Calu3 (cell line): ENCODE measurements at regions of chr11 and their contacts with region 1.

Region 1: DNA sequence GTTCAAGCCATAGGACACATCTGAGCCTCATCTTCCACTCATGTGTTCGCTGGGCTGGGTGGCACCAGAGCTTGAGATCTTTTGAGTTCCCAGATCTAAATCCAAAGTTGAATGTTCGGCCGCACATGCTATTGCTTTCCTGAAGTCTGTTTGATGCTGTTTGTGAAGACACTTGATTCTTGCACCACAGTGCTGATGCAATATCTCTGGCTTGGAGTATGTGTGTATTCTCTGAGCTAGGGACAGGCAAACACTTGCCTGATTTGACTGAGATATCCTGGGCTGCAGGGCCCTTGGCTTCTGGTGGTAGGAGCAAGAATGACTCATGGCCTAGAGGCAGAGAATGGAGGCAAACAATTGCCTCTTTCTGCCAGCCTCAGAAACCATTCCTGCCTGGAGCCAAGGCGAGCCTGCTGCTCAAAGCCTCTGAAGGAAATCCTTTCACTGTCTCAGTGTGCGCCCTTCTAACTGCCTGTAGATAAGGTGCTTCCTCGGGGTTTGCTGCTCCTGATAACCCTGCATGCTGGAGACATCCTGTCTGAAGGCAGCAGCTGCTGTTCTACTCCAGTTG is 73.0 kb downstream of the CYB5R2 start:
- DNase-seq: peak; percentile 68
- H3K4me3 Mint-ChIP-seq: peak overlapping the region; percentile 26
- H3K27ac Mint-ChIP-seq: peak overlapping the region; percentile 87
- H3K4me1 Mint-ChIP-seq: peaks cover 62% of the 10 kb centered on the region
- H3K27me3 Mint-ChIP-seq: no peaks in the 10 kb centered on the region
- CTCF ChIP-seq: no peak

Region 2: DNA sequence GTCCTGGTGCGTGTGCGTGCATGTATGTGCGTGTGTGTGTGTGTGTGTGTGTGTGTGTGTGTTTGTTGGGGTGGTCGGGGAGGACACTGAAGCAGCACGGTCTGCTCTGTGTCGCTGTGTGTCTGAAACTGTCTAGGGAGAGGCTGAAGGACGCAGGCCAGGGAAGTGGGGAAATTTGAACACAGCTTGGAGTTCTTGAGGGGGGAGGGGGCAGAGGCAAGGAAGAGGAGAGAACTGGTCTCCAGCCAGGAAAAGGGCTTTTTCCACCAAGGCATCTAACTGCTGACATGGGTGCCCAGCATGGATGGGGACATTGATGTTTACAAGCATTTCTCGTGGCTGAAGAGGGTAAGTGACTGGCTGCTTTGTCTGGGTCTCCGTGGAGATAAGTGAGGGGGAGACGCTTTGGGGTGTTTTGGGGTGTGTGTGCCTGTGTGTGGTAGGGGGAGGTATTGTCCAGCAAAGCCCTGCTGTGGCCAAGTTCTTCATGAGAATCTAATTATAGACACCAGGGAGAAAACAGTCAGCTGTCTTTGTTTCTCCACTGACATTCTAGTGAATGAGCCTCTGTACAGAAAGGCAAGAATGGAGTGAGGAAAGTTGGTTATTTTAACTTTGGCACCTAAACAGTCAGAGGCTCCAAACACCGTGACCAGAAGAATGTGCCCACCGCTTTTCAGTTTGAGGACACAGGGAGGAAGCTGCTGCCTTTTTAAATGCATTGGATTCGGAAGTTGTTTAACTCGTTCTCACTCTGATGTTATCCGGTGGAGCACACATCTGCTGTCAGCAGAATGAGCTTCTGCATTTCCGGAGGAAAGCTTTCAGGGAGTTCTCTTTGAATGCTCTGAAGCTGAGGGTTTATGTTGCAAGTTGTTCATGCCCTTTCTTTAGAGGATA is 22.7 kb before region 1 on chr11:
- CTCF ChIA-PET with region 1: interaction called, 13 read pairs
- intact Hi-C with region 1: loop called (anchors 1 kb)
- DNase-seq: no peak
- H3K4me3 Mint-ChIP-seq: peak overlapping the region; percentile 40
- H3K27ac Mint-ChIP-seq: peak overlapping the region; percentile 73
- H3K4me1 Mint-ChIP-seq: peaks cover 70% of the 10 kb centered on the region
- H3K27me3 Mint-ChIP-seq: no peaks in the 10 kb centered on the region
- CTCF ChIP-seq: no peak

Region 3: DNA sequence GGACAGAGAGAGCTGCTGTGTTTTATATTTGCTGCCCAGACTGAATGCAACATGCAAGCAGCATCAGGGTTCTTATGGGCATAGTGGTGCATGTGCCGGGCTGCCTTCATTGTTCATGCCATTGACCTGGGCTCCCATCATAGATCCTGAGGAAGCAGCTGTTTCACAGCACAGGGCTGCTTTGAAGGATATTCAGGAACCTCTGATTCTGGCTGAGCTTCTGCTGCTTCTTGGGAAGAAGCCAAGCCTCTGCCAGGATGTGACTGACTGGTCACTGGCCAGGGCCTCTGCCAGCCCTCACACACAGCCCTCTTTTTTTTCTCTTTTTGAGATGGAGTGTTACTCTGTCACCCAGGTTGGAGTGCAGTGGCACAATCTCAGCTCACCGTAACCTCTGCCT is 29.7 kb after region 1 on chr11:
- CTCF ChIA-PET with region 1: no interaction called
- intact Hi-C with region 1: no loop called
- DNase-seq: no peak
- H3K4me3 Mint-ChIP-seq: no peak overlapping the region
- H3K27ac Mint-ChIP-seq: no peak overlapping the region
- H3K4me1 Mint-ChIP-seq: no peaks in the 10 kb centered on the region
- H3K27me3 Mint-ChIP-seq: no peaks in the 10 kb centered on the region
- CTCF ChIP-seq: no peak

Region 4: DNA sequence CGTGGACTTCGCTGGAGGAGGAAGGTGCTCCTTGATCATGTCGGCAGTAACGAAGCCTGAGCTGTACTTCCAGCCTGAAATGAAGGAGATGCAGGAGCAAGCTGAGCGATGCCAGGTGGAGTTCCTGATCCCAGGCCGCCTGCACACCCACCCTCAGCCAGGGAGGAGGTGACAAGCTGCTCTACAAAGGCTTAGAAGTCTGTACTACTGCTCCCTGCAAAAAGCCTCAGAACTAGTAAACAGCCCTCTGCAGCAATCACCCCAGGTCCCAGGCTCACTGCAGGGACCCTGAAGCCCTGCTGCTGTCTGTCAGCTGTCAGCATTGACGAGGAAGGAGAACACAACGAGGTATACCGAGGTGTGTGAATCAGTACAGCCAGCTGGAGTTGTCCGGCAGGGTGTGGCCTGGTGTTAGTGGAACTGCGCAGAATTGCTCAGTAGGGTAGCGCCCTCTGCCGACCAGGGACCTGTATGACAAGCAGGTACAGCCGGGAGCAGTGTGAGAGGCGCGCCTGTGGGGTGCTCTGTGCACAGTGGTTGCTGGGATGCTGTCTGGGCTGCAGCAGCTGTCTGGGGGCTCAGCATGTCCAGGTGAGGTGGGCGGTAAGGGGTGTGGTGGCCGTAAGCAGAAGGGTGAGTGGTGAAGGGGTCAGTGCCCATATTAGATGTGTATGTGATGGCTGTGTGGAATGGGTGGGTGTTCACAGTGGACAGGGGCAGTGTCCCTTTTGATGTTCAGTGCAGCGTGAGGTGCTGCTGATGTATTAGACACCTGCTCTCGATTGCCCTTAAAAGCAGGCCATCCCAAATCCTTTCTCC is 65.4 kb after region 1 on chr11:
- CTCF ChIA-PET with region 1: no interaction called
- intact Hi-C with region 1: no loop called
- DNase-seq: peak; percentile 92
- H3K4me3 Mint-ChIP-seq: no peak overlapping the region
- H3K27ac Mint-ChIP-seq: no peak overlapping the region
- H3K4me1 Mint-ChIP-seq: peaks cover 16% of the 10 kb centered on the region
- H3K27me3 Mint-ChIP-seq: no peaks in the 10 kb centered on the region
- CTCF ChIP-seq: peak; percentile 79